Aorta (tissue), 5 donors: ENCODE measurements at regions of chr5 and their contacts with region 1.

Region 1: DNA sequence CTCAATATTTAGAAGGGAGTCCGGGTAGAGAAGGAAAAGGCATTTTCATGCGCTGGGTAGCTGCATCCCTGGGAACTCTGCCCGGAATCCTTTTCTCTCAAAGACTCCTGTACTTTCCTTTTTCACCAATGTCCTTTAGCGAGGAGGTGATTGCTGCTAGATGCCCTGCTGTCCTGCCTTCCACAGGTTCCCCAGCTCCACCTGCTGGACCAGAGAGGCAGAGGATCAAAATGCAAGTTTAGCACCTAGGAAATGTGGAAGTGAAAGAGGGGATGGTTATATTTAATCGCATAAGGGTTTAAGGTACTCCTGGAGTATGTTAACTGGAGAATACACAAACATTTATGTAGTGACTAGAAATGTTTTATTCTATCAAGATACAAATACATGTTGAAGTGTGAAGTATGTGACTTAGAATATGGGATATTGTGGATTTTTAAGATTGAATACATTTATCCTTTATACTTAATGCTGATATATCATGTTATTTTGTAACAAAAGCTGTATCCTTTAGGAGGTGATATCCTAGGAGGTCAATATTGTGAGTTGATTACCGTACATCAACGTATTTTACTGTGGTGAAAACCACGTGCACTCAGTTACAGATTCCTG is 145.7 kb downstream of the ARHGAP26 start:
- DNase-seq: no peak
- ATAC-seq: no peak
- H3K4me3 ChIP-seq: no peak overlapping the region
- H3K27ac ChIP-seq: no peak overlapping the region
- H3K4me1 ChIP-seq: no peaks in the 10 kb centered on the region
- H3K27me3 ChIP-seq: no peaks in the 10 kb centered on the region

Region 2: GRCh38 chr5:143177263-143177983 is 261.5 kb after region 1 on chr5:
- intact Hi-C with region 1: loop called in 1 of 2 experiments (anchors 10 kb)
- DNase-seq: peak; percentile 72 to 80
- ATAC-seq: peak; percentile 52
- H3K4me3 ChIP-seq: no peak overlapping the region
- H3K27ac ChIP-seq: peak overlapping the region in 1 of 2 donors; percentile 8
- H3K4me1 ChIP-seq: peaks cover 0 to 5% of the 10 kb centered on the region in 2 donors
- H3K27me3 ChIP-seq: no peaks in the 10 kb centered on the region